K562 (cell line): ENCODE measurements at regions of chr13 and their contacts with region 1.

Region 1: DNA sequence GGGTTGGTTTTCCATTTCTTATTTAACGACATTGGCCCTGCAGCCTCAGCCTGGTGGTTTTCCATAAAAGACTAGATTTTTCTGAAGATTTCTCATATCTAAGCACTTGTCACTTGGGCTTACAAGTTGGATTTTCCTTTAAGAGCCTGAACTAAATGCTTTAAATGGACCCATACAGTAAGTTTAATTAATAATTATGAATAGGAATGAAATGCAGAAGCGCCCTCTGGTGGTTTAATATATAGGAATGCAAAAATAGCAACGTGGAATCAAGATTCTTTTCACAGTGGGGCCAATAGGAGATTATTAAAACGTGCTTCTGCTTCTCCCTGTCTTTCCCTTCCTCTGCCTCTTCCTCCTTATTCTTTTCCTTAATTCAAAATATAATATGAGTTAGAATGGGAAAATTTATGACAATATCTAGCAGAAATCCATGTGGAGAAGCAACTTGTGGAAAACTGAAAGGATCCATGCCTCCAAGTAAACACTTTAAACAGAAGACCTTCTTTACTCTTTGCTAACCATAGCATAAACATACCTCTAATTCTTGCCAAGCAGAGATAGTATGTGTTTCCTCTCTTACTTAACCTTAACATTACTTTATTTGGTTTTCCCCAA is 324.0 kb downstream of the GPC5 start:
- DNase-seq: peak; percentile 57 to 67 (median 63)
- ATAC-seq: peak; percentile 48; the same call in 2 of the 3 replicates
- H3K4me3 ChIP-seq: no peak overlapping the region
- H3K27ac ChIP-seq: no peak overlapping the region
- H3K4me1 ChIP-seq: no peaks in the 10 kb centered on the region
- H3K27me3 ChIP-seq: no peaks in the 10 kb centered on the region
- CTCF ChIP-seq: peak in 2 of 3 experiments; percentile 67 to 86; a peak in 4 of 6 replicates
- EP300 ChIP-seq: no peak
- POLR2A ChIP-seq: no peak
- RAD21 ChIP-seq: peak; percentile 80 to 88

Region 2: DNA sequence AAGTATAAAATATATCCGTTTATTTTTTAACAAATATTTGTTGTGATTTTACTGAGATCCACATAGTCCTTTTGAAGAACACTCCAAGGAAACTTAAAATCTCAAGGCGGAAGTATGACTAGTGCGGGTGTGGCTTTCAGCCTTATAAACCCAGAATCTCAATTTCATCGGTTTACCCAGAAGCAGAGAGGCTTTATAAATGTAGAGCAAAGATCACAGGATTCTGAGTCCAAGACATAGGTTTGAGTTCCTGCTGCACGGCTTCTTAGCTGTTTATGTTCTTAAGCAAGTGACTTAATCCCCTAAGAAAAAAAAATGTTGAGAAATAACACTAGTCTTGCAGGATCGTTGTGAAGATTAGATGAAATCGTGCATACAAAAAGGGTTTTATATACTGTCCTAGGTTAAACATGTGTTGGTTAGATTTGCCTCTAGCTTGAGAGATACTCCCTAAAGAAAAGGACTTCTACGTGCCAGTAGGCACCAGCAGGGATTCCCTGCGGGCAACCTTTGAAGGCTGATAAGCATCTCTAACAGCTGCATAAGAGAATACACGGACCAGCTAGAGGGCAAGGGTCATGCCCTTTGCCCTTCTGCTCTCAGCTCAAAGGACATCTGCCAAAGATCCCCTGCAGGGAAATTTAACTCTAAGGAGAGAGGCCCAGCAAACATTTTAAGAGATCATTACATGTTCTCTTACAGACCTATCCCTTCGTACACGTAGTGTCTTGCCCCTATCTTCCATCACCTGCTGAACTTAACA is 505.3 kb before region 1 on chr13:
- CTCF ChIA-PET with region 1: no interaction called
- POLR2A ChIA-PET with region 1: no interaction called
- in situ Hi-C with region 1: no loop called
- intact Hi-C with region 1: no loop called
- DNase-seq: no peak
- ATAC-seq: no peak
- H3K4me3 ChIP-seq: no peak overlapping the region
- H3K27ac ChIP-seq: no peak overlapping the region
- H3K4me1 ChIP-seq: no peaks in the 10 kb centered on the region
- H3K27me3 ChIP-seq: no peaks in the 10 kb centered on the region
- CTCF ChIP-seq: no peak
- EP300 ChIP-seq: no peak
- POLR2A ChIP-seq: no peak
- RAD21 ChIP-seq: no peak

Region 3: DNA sequence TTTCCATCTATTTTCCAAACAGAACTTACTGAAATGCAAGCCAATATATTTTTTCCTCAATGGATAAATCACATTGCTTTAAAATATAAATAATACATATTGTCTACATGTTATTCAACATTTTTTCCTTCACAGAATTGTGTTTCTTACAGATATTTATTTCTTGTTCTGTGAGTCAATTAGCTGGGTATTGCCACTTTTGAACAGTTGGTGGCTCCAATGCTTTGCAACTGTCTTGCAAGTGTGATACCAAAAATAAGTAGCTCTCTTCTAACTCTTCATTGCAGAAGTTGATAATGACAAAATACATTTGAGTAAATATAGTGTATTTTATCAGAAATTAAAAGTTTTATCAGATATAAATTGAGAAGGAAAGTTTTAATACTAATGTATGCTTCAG is 341.0 kb before region 1 on chr13:
- CTCF ChIA-PET with region 1: no interaction called
- POLR2A ChIA-PET with region 1: no interaction called
- in situ Hi-C with region 1: no loop called
- intact Hi-C with region 1: loop called (anchors 1 kb)
- DNase-seq: peak in 1 of 4 experiments; percentile 60
- ATAC-seq: peak; percentile 55; the same call in 2 of the 3 replicates
- H3K4me3 ChIP-seq: no peak overlapping the region
- H3K27ac ChIP-seq: no peak overlapping the region
- H3K4me1 ChIP-seq: no peaks in the 10 kb centered on the region
- H3K27me3 ChIP-seq: no peaks in the 10 kb centered on the region
- CTCF ChIP-seq: peak in 1 of 3 experiments; percentile 81; a peak in 2 of 6 replicates
- EP300 ChIP-seq: no peak
- POLR2A ChIP-seq: no peak
- RAD21 ChIP-seq: no peak

Region 4: GRCh38 chr13:91767651-91768050 is 45.3 kb after region 1 on chr13:
- CTCF ChIA-PET with region 1: no interaction called
- POLR2A ChIA-PET with region 1: no interaction called
- in situ Hi-C with region 1: no loop called
- intact Hi-C with region 1: no loop called
- DNase-seq: no peak
- ATAC-seq: no peak
- H3K4me3 ChIP-seq: no peak overlapping the region
- H3K27ac ChIP-seq: no peak overlapping the region
- H3K4me1 ChIP-seq: no peaks in the 10 kb centered on the region
- H3K27me3 ChIP-seq: no peaks in the 10 kb centered on the region
- CTCF ChIP-seq: no peak
- EP300 ChIP-seq: no peak
- POLR2A ChIP-seq: no peak
- RAD21 ChIP-seq: no peak

Region 5: GRCh38 chr13:91825516-91825915 is 103.1 kb after region 1 on chr13:
- CTCF ChIA-PET with region 1: no interaction called
- POLR2A ChIA-PET with region 1: no interaction called
- in situ Hi-C with region 1: no loop called
- intact Hi-C with region 1: no loop called
- DNase-seq: no peak
- ATAC-seq: no peak
- H3K4me3 ChIP-seq: no peak overlapping the region
- H3K27ac ChIP-seq: no peak overlapping the region
- H3K4me1 ChIP-seq: no peaks in the 10 kb centered on the region
- H3K27me3 ChIP-seq: no peaks in the 10 kb centered on the region
- CTCF ChIP-seq: no peak
- EP300 ChIP-seq: no peak
- POLR2A ChIP-seq: no peak
- RAD21 ChIP-seq: no peak

Region 6: DNA sequence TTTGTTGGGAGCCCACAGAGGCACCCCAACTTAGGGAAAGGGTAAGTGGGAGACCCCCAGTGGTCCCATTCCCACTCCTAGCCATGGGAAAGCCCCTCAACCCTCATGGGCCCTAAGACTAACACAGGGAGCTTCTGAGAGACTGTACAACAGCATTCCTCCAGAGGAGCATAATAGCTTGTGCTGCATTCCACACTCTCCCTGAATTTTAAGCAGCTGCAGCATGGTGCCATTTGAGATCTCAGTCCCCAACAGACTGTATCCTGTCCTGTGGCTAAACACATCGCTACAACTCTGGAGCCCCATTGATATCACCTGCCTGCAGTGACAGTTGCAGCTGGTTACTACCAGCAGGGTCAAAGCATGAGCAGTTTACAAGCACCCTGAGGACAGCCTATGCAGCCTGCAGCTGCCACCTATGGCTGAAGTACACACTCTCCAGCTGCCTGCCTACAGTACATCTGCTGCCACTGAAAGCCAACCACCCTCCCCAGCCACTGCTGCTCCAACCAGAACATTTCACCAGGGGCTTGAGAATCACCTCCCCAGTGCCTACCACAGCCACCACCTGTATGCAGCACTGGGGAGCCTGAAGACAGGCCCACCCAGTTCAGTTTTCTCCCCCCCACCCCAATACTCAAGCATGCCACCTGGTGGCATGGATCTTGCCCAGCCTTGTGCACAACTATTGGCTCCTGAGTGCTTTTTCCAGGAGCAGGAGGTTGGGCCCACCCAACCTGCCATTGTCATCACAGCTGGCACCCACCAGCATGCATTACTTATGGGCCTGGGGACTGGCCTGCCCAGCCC is 233.4 kb after region 1 on chr13:
- CTCF ChIA-PET with region 1: no interaction called
- POLR2A ChIA-PET with region 1: no interaction called
- in situ Hi-C with region 1: no loop called
- intact Hi-C with region 1: no loop called
- DNase-seq: no peak
- ATAC-seq: no peak
- H3K4me3 ChIP-seq: no peak overlapping the region
- H3K27ac ChIP-seq: no peak overlapping the region
- H3K4me1 ChIP-seq: no peaks in the 10 kb centered on the region
- H3K27me3 ChIP-seq: no peaks in the 10 kb centered on the region
- CTCF ChIP-seq: no peak
- EP300 ChIP-seq: no peak
- POLR2A ChIP-seq: no peak
- RAD21 ChIP-seq: no peak